ENCODE measurements at regions of chr11 and their contacts with region 1.

Region 1: DNA sequence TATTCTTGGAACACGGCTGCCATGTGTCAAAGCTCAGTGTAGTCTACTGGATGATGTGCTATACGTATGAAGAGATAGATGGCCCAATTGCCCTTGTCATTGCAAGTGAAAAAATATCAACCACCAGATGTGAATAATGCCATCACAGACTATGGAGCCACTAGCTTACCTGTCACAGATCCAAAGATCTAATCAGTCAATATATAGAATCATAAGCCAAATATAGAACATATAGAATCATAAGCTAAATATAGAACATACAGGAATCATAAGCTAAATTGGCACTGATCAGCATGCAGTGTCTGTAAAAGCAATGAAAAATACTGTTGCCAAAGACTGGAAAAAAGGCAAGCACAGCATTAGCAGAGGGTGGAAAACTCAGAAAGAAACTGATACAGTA is 1656.9 kb upstream of the RAG2 start:
- DNase-seq: no peak
- ATAC-seq: no peak
- H3K4me3 ChIP-seq: no peak overlapping the region
- H3K27ac ChIP-seq: no peak overlapping the region
- H3K4me1 ChIP-seq: no peaks in the 10 kb centered on the region
- H3K27me3 ChIP-seq: no peaks in the 10 kb centered on the region

Region 2: GRCh38 chr11:38640854-38641253 is 385.9 kb after region 1 on chr11:
- intact Hi-C with region 1: loop called in 1 of 4 experiments (anchors 5 kb)
- DNase-seq: no peak
- ATAC-seq: no peak
- H3K4me3 ChIP-seq: no peak overlapping the region
- H3K27ac ChIP-seq: no peak overlapping the region
- H3K4me1 ChIP-seq: no peaks in the 10 kb centered on the region
- H3K27me3 ChIP-seq: no peaks in the 10 kb centered on the region

Region 3: DNA sequence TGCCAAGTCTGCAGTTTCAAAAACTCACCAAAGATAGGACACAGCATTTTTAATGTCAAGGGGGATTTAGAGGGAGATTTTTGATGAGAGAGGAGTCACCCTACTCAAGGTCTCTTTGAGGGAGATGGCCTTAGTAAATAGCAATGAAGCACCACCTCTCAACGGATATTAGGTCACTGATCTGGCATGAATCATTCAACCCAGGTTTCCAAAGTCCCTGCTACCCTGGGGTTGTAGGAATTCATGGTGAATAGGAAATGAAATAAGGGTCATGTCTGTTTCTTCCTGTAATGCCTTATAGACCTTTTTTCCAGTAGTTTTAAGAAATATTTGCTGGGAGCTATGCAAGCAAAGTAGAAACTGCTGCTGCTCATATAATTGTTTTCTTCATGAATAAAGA is 1049.7 kb after region 1 on chr11:
- intact Hi-C with region 1: no loop called
- DNase-seq: no peak
- ATAC-seq: no peak
- H3K4me3 ChIP-seq: no peak overlapping the region
- H3K27ac ChIP-seq: no peak overlapping the region
- H3K4me1 ChIP-seq: peaks cover 4% of the 10 kb centered on the region
- H3K27me3 ChIP-seq: no peaks in the 10 kb centered on the region